ENCODE measurements at regions of chr1 and their contacts with region 1.

Region 1: DNA sequence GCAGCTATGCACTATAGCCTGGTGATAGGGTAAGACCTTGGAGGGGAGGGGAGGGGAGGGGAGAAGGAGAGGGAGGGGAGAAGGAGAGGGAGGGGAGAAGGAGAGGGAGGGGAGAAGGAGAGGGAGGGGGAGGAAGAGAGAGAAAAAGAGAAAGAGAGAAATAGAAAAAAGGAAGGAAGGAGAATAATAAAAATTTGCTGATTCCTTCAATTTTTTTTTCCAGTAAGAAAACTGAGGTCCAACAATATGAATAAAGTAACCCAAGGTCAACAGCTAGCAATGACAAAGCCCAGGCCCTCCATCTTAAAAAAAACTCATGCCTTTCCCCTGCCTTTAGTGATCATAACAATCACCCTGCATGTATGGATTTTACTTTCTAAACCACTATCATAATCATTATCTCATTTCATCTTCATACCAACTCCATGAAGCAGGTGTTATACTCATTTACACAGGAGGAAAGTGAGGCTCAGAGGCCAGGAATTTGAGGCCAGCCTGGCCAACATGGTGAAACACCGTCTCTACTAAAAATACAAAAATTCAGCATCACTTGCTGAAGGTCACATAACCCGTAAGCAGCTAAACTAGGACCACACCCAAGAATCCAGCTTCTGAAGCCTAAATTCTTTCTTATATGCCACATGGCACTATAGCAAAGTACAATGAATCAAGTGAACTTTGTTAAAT is 23.4 kb upstream of the BRDT start:
- DNase-seq: no peak
- ATAC-seq: no peak
- H3K4me3 ChIP-seq: no peak overlapping the region
- H3K27ac ChIP-seq: peak overlapping the region in 1 of 2 experiments; percentile 58; a peak in 4 of 6 replicates
- H3K4me1 ChIP-seq: peaks cover 10% of the 10 kb centered on the region; the same call in 2 of the 3 replicates
- CTCF ChIP-seq: no peak
- EP300 ChIP-seq: no peak
- POLR2A ChIP-seq: no peak
- RAD21 ChIP-seq: no peak

Region 2: GRCh38 chr1:91523482-91523881 is 402.3 kb before region 1 on chr1:
- CTCF ChIA-PET with region 1: interaction called, 12 read pairs
- POLR2A ChIA-PET with region 1: no interaction called
- DNase-seq: peak in 1 of 2 experiments; percentile 28
- ATAC-seq: no peak; a peak in 1 of 6 replicates
- H3K4me3 ChIP-seq: no peak overlapping the region
- H3K27ac ChIP-seq: no peak overlapping the region
- H3K4me1 ChIP-seq: peaks cover 11% of the 10 kb centered on the region; the same call in 2 of the 3 replicates
- CTCF ChIP-seq: no peak
- EP300 ChIP-seq: no peak
- POLR2A ChIP-seq: no peak
- RAD21 ChIP-seq: no peak

Region 3: DNA sequence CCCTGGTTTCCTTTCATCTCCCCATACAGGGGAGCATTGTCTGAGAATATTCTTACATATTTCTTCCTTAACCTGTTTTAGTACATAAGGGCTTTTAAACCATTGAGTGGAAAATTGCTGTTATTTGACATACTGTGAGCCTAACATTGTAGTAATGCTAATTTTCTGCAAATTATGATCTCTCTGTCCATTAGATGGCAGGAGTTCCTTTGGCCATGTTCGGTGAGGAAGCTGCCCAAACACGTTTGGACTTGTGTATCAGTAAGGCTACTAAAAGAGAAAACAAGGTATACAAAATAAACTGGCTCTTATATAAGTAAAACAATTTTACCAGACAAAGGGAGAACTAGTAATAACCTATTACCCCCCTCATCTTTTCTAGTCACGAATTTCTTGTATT is 395.9 kb before region 1 on chr1:
- CTCF ChIA-PET with region 1: interaction called, 14 read pairs
- POLR2A ChIA-PET with region 1: no interaction called
- DNase-seq: peak in 1 of 2 experiments; percentile 44
- ATAC-seq: peak in 1 of 2 experiments; percentile 66; a peak in 3 of 6 replicates
- H3K4me3 ChIP-seq: no peak overlapping the region
- H3K27ac ChIP-seq: peak overlapping the region; percentile 59 to 80
- H3K4me1 ChIP-seq: 0 out of 3 replicates have a peak, but pooled peaks cover 6% of the 10 kb centered on the region
- CTCF ChIP-seq: peak; percentile 62
- EP300 ChIP-seq: no peak
- POLR2A ChIP-seq: no peak
- RAD21 ChIP-seq: peak; percentile 77

Region 4: GRCh38 chr1:91774520-91775203 is 151.1 kb before region 1 on chr1:
- CTCF ChIA-PET with region 1: no interaction called
- POLR2A ChIA-PET with region 1: no interaction called
- DNase-seq: no peak
- ATAC-seq: no peak
- H3K4me3 ChIP-seq: no peak overlapping the region
- H3K27ac ChIP-seq: no peak overlapping the region
- H3K4me1 ChIP-seq: no peaks in the 10 kb centered on the region
- CTCF ChIP-seq: no peak
- EP300 ChIP-seq: no peak
- POLR2A ChIP-seq: no peak
- RAD21 ChIP-seq: no peak